ENCODE measurements at regions of chr4 and their contacts with region 1.

Region 1: DNA sequence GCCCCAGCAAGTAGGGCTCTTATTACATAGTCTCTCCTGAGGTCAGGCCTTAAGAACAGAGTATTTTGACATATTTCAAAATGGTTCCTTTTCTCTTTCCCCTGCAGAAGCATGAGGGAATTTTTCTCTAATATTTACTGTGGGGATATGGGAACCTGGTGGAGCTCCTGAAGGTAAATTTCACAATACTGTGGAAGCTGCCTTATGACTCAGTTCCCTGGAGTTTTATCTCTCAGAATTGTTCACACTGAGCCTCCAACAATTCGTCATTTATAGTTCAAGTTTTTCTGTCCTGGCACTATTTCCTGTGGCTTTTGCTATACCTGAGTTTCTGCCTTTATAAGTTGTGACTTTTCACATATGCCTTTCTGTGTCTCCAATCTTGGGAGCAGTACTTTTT is 607.2 kb upstream of the NDST4 start:
- DNase-seq: no peak
- ATAC-seq: no peak
- H3K4me3 ChIP-seq: no peak overlapping the region
- H3K27ac ChIP-seq: no peak overlapping the region
- H3K4me1 ChIP-seq: no peaks in the 10 kb centered on the region
- H3K27me3 ChIP-seq: no peaks in the 10 kb centered on the region
- CTCF ChIP-seq: no peak
- EP300 ChIP-seq: no peak
- POLR2A ChIP-seq: no peak
- RAD21 ChIP-seq: no peak

Region 2: GRCh38 chr4:115678425-115678941 is 42.1 kb before region 1 on chr4:
- CTCF ChIA-PET with region 1: no interaction called
- POLR2A ChIA-PET with region 1: no interaction called
- RAD21 ChIA-PET with region 1: no interaction called
- SMC1A ChIA-PET with region 1: no interaction called
- in situ Hi-C with region 1: no loop called
- intact Hi-C with region 1: no loop called
- DNase-seq: no peak
- ATAC-seq: no peak
- H3K4me3 ChIP-seq: no peak overlapping the region
- H3K27ac ChIP-seq: no peak overlapping the region
- H3K4me1 ChIP-seq: no peaks in the 10 kb centered on the region
- H3K27me3 ChIP-seq: no peaks in the 10 kb centered on the region
- CTCF ChIP-seq: no peak
- EP300 ChIP-seq: no peak
- POLR2A ChIP-seq: no peak
- RAD21 ChIP-seq: no peak

Region 3: DNA sequence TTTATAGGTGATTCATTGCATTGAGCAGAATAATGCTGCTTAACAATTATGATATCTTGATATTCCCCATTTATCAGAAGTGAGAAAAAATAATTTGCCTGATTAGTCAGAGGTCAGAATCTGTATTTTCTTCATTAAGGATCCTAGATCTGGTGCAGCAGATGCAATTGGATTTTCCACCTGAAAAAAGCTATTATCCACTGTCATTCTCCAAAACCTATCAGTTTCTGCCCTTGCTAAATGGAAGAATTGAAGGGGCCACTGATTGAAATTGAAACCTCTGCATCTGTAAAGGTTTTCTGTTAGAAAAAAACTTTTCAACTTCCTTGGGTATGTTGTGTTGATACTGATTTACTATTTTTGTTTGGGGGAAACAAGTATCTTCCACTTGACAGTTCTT is 28.8 kb after region 1 on chr4:
- CTCF ChIA-PET with region 1: no interaction called
- POLR2A ChIA-PET with region 1: no interaction called
- RAD21 ChIA-PET with region 1: no interaction called
- SMC1A ChIA-PET with region 1: no interaction called
- in situ Hi-C with region 1: no loop called
- intact Hi-C with region 1: no loop called
- DNase-seq: no peak
- ATAC-seq: no peak
- H3K4me3 ChIP-seq: no peak overlapping the region
- H3K27ac ChIP-seq: no peak overlapping the region
- H3K4me1 ChIP-seq: no peaks in the 10 kb centered on the region
- H3K27me3 ChIP-seq: no peaks in the 10 kb centered on the region
- CTCF ChIP-seq: no peak
- EP300 ChIP-seq: no peak
- POLR2A ChIP-seq: no peak
- RAD21 ChIP-seq: no peak

Region 4: GRCh38 chr4:115770046-115770543 is 49.5 kb after region 1 on chr4:
- CTCF ChIA-PET with region 1: no interaction called
- POLR2A ChIA-PET with region 1: no interaction called
- RAD21 ChIA-PET with region 1: no interaction called
- SMC1A ChIA-PET with region 1: no interaction called
- in situ Hi-C with region 1: no loop called
- intact Hi-C with region 1: loop called (anchors 1 kb)
- DNase-seq: no peak
- ATAC-seq: no peak
- H3K4me3 ChIP-seq: no peak overlapping the region
- H3K27ac ChIP-seq: no peak overlapping the region
- H3K4me1 ChIP-seq: no peaks in the 10 kb centered on the region
- H3K27me3 ChIP-seq: no peaks in the 10 kb centered on the region
- CTCF ChIP-seq: no peak
- EP300 ChIP-seq: no peak
- POLR2A ChIP-seq: no peak
- RAD21 ChIP-seq: no peak

Measured in GM12878 (cell line).